Heart left ventricle (tissue), 16 donors: ENCODE measurements at regions of chr9 and their contacts with region 1.

Region 1: DNA sequence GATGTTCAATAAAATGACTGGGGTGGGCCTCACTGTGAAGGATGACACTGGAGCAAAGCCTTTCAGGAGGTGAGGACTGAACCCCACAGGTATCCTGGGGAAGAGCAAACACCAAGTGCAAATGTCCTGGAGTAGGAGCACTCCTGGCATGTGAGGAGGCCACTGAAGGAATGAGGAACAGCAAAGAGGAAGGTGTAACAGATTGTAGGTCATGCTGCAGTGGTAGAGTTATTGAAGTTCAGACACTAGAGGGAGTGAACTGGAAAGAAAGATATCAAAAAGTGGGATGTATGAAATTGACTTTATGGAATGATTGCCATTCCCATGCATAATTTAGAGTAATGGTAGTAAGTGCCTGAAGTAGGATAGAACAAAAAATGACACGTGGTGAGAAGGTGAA is 21.8 kb downstream of the KCNV2 start:
- DNase-seq: no peak
- ATAC-seq: no peak
- H3K4me3 ChIP-seq: no peak overlapping the region
- H3K27ac ChIP-seq: no peak overlapping the region
- H3K4me1 ChIP-seq: peaks cover 0 to 7% (median 0%) of the 10 kb centered on the region in 12 donors
- H3K27me3 ChIP-seq: no peaks in the 10 kb centered on the region
- CTCF ChIP-seq: no peak
- POLR2A ChIP-seq: no peak

Region 2: GRCh38 chr9:2234371-2234893 is 504.6 kb before region 1 on chr9:
- intact Hi-C with region 1: loop called in 1 of 10 experiments (anchors 10 kb)
- DNase-seq: peak in 2 of 5 donors; percentile 29 to 54
- ATAC-seq: peak; percentile 73 to 86 (median 79)
- H3K4me3 ChIP-seq: no peak overlapping the region
- H3K27ac ChIP-seq: peak overlapping the region in 4 of 12 donors; percentile 23 to 45 (median 26)
- H3K4me1 ChIP-seq: peaks cover 0 to 30% (median 5%) of the 10 kb centered on the region in 12 donors
- H3K27me3 ChIP-seq: no peaks in the 10 kb centered on the region
- CTCF ChIP-seq: no peak
- POLR2A ChIP-seq: no peak

Region 3: DNA sequence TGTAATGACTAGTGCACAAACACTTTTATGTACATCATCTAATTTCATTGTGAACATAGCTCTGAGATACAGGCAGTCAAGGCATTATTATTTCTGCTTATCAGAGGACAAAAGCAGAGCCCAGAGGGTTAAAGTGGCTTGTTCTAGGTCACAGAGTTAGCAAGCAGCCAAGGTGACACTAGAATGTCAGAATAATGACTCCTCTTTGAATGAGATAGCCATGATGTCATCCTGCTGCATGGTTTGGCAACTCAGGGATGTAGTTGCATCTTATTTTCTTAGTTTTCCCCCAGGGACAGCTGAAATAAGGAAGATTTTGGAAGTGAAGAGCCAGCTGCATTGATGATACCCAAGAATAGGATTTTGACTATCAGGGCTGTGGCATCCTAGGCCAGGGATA is 32.6 kb after region 1 on chr9:
- intact Hi-C with region 1: no loop called
- DNase-seq: no peak
- ATAC-seq: peak in 3 of 4 donors; percentile 34 to 68 (median 41)
- H3K4me3 ChIP-seq: no peak overlapping the region
- H3K27ac ChIP-seq: peak overlapping the region in 2 of 12 donors; percentile 15 to 40
- H3K4me1 ChIP-seq: peaks cover 0 to 15% (median 7%) of the 10 kb centered on the region in 12 donors
- H3K27me3 ChIP-seq: no peaks in the 10 kb centered on the region
- CTCF ChIP-seq: no peak
- POLR2A ChIP-seq: no peak